ENCODE measurements at regions of chr19 and their contacts with region 1.

Region 1: GRCh38 chr19:40662921-40663694 is 27.3 kb downstream of the NUMBL start:
- DNase-seq: peak; percentile 94
- H3K4me3 Mint-ChIP-seq: peak overlapping the region; percentile 74
- H3K27ac Mint-ChIP-seq: peak overlapping the region; percentile 76
- H3K4me1 Mint-ChIP-seq: peaks cover 27% of the 10 kb centered on the region
- H3K27me3 Mint-ChIP-seq: no peaks in the 10 kb centered on the region

Region 2: DNA sequence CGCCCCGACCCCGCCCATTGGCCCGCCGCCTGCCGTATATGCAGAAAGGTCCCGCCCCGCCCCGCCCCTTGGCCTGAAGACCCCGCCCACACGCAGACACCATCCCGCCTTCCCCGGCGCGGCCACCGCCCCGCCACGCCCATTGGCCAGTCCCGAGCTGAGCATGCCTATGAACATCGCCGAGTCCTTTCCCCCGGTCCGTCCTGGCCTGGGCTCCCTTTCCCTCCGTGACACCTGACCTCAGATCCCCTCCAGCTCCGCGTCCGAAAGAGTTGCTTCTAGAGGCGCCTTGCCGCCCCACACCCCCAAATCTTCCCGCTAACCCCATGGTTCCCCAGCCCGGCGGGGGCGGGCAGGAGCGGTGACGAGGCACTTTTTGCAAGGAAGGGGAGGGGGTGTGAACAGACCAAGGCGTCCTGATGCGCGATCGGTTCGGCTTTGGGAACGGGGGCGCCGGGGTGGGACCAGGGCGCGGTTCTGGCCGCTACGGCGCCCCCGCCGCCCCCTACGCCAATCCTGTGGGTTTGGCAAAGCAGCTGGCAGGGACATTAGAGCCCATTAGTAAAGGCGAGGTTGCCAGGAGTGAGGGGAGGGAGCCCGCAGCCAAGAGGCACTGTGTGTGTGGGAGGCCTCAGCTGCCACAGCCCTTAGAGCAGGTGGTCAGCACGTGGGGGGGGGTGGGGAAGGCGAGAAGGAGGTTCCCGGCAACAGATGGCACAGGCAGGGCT is 27.7 kb after region 1 on chr19:
- CTCF ChIA-PET with region 1: interaction called, 3 read pairs
- POLR2A ChIA-PET with region 1: interaction called, 5 read pairs
- intact Hi-C with region 1: loop called (anchors 2 kb)
- DNase-seq: peak; percentile 95
- H3K4me3 Mint-ChIP-seq: peak overlapping the region; percentile 79
- H3K27ac Mint-ChIP-seq: peak overlapping the region; percentile 93
- H3K4me1 Mint-ChIP-seq: peaks cover 4% of the 10 kb centered on the region
- H3K27me3 Mint-ChIP-seq: no peaks in the 10 kb centered on the region

Region 3: DNA sequence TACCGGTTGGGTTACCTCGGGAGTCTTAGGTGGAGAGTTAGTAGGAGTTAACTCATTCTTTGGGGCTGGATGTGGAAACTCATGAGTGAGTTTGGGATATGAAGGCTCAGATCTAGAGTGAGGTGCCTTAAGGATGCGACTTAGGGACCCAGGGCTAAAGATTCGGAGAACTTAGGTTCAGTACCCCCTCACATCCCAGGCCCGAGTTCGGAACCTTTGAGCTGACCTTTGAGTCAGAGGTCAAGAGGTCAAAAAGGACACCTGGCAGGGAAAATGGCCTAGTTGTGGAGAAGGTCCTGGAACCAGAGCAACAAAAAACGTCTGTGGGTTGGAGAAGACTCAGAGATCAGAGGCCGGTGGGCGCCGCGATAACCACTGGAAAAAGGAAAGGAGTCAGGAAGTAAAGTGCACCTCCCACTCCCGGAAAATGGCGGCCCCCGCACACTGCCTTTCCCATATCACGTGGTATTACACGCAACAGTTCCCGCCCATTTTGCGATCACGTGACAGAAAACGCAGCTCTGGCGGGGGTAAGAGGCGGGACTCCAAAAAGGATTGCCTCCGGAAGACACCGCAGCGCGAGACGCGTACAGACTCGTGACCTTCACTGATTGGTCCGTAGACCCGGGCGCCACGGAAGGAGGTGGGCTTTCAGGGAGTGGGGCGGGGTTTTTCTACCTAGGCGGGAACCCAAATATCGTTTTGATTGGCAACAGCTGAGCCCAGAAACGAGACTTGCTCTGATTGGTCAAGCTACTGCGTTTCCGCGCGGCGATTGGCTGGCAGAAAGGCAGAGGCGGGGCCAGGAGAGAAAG is 87.2 kb after region 1 on chr19 and contains the start of gene ACTMAP:
- CTCF ChIA-PET with region 1: interaction called, 13 read pairs
- POLR2A ChIA-PET with region 1: interaction called, 6 read pairs
- intact Hi-C with region 1: loop called (anchors 2 kb)
- DNase-seq: peak; percentile 100
- H3K4me3 Mint-ChIP-seq: peak within 1 kb of the TSS; percentile 94
- H3K27ac Mint-ChIP-seq: peak within 1 kb of the TSS; percentile 97
- H3K4me1 Mint-ChIP-seq: peaks cover 32% of the 10 kb centered on the region
- H3K27me3 Mint-ChIP-seq: no peaks in the 10 kb centered on the region
- total RNA-seq, gene ACTMAP: 14.1 to 15.8 TPM

Region 4: GRCh38 chr19:40806488-40807468 is 143.7 kb after region 1 on chr19:
- CTCF ChIA-PET with region 1: interaction called, 50 read pairs
- POLR2A ChIA-PET with region 1: interaction called, 5 read pairs
- intact Hi-C with region 1: no loop called
- DNase-seq: peak; percentile 89
- H3K4me3 Mint-ChIP-seq: peak overlapping the region; percentile 67
- H3K27ac Mint-ChIP-seq: peak overlapping the region; percentile 89
- H3K4me1 Mint-ChIP-seq: peaks cover 81% of the 10 kb centered on the region
- H3K27me3 Mint-ChIP-seq: no peaks in the 10 kb centered on the region

Region 5: DNA sequence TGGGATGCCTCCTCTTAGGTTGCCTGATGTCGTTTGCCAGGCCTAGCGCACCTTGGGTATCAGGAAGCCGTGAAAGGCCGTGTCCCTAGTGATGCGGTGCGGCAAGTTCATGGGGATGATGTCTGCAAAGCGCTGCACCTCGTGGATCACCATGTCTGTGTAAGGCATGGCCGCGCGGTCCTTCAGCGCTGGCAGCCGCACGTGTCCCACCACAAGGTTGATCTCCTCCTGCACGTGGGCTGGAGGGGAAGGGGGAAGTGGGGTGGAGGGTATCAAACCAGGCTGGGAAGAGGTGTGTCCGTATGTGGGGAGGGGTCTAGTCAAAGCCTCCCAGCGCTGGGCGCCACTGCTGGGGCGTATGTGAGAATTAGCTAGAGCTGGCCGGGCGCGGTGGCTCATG is 159.1 kb after region 1 on chr19:
- CTCF ChIA-PET with region 1: interaction called, 68 read pairs
- POLR2A ChIA-PET with region 1: interaction called, 6 read pairs
- intact Hi-C with region 1: loop called (anchors 1 kb)
- DNase-seq: peak; percentile 6
- H3K4me3 Mint-ChIP-seq: no peak overlapping the region
- H3K27ac Mint-ChIP-seq: no peak overlapping the region
- H3K4me1 Mint-ChIP-seq: peaks cover 32% of the 10 kb centered on the region
- H3K27me3 Mint-ChIP-seq: no peaks in the 10 kb centered on the region

Region 6: DNA sequence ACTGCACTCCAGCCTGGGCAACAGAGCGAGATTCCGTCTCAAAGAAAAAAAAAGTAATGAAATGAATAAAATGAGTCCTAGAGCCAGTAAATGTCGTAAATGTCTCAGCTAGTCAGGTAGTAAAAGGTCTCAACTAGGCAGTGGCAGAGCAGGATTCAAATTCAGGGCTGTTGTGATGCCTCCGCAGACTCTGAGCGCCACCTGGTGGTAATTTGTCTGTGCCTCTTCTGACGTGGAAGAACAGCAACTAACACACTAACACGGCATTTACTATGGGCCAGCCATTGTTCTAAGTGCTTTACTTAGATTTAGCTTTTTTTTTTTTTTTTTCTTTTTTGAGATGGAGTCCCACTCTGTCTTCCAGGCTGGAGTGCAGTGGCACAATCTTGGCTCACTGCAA is 481.3 kb after region 1 on chr19:
- CTCF ChIA-PET with region 1: interaction called, 17 read pairs
- POLR2A ChIA-PET with region 1: no interaction called
- intact Hi-C with region 1: loop called (anchors 2 kb)
- DNase-seq: peak; percentile 91
- H3K4me3 Mint-ChIP-seq: peak overlapping the region; percentile 18
- H3K27ac Mint-ChIP-seq: peak overlapping the region; percentile 59
- H3K4me1 Mint-ChIP-seq: no peaks in the 10 kb centered on the region
- H3K27me3 Mint-ChIP-seq: peaks cover 7% of the 10 kb centered on the region

Measured in activated CD4-positive, alpha-beta memory T cell treated with anti-CD3 and anti-CD28 coated beads for 36 hours (primary cell).